Activated CD4-positive, alpha-beta T cell treated with anti-CD3 and anti-CD28 coated beads for 36 hours (primary cell): ENCODE measurements at regions of chr2 and their contacts with region 1.

Region 1: GRCh38 chr2:207166039-207166348 is 246 bp upstream of the KLF7 start:
- DNase-seq: peak; percentile 98
- ATAC-seq: peak; percentile 91
- H3K4me3 Mint-ChIP-seq: peak overlapping the region; percentile 90
- H3K27ac Mint-ChIP-seq: peak overlapping the region; percentile 95
- H3K4me1 Mint-ChIP-seq: peaks cover 44% of the 10 kb centered on the region
- H3K27me3 Mint-ChIP-seq: no peaks in the 10 kb centered on the region

Region 2: DNA sequence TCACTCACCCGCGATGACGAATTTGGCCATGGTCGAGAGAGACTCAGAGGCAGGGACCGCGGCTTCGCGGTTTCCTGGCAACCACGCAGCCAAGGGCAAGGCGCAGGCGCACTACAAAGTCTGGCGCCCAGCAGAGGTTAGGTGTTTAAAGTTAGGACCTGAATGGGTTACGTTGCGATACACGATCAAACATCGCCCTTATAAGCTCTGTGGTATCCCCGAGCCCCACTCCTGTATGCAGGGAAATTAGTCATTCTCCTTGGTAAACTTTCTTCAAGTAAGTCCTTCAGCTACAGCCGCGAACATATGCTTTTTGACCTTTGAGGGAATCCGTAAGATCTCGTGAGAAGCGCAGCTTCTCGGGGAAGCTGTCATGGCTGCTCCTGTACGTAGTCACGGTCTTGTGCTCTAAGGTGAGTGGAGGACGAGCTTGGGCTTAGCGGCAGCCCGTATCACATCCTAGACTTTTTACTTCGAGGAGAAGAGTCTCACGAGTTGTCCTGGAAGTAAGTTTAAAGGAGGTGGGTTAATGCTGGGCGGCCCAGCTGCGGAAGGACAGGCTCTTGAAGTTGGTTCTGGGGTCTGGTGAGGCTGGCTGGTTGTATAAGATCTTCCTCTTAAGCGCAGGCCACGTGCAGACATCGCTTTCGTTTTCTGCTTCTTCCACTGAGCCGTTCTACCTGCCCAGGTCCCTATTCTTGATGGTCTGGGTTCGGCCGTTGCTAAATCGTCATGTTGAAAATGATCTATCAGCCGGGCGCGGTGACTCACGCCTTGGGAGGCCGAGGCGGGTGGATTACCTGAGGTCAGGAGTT is 400.5 kb before region 1 on chr2 and contains the starts of genes FASTKD2 and MDH1B:
- CTCF ChIA-PET with region 1: no interaction called
- POLR2A ChIA-PET with region 1: interaction called, 4 read pairs
- intact Hi-C with region 1: loop called in 1 of 2 experiments (anchors 1 kb)
- DNase-seq: peak; percentile 93
- ATAC-seq: peak; percentile 87
- H3K4me3 Mint-ChIP-seq: peak within 1 kb of the TSS; percentile 93
- H3K27ac Mint-ChIP-seq: peak within 1 kb of the TSS; percentile 98
- H3K4me1 Mint-ChIP-seq: peaks cover 37% of the 10 kb centered on the region
- H3K27me3 Mint-ChIP-seq: no peaks in the 10 kb centered on the region
- total RNA-seq, gene FASTKD2: 33.9 to 37.0 TPM
- total RNA-seq, gene MDH1B: 0.83 to 1.3 TPM

Region 3: DNA sequence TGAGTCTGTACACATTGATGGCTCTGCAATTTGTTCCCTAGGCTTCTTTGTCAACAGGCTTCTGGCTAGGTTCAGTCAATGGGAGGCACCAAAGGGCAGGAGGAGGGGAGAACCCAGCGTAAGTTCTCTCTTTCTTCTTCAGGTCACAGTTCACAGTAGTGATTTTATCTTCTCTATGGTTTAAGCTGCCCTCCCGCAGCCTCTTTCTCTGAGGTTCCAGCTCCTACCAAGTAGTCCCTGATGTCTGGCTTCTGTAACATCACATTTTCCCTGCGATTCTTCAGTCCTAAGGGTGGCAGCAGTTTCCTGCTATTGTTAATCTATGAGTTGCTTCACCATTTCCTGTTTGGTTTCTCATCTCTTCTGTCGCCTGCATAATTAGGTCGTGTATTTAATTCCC is 119.3 kb before region 1 on chr2:
- CTCF ChIA-PET with region 1: no interaction called
- POLR2A ChIA-PET with region 1: no interaction called
- intact Hi-C with region 1: loop called (anchors 2 to 5 kb)
- DNase-seq: peak; percentile 44
- ATAC-seq: peak; percentile 95
- H3K4me3 Mint-ChIP-seq: no peak overlapping the region
- H3K27ac Mint-ChIP-seq: peak overlapping the region; percentile 19
- H3K4me1 Mint-ChIP-seq: peaks cover 13% of the 10 kb centered on the region
- H3K27me3 Mint-ChIP-seq: no peaks in the 10 kb centered on the region

Region 4: DNA sequence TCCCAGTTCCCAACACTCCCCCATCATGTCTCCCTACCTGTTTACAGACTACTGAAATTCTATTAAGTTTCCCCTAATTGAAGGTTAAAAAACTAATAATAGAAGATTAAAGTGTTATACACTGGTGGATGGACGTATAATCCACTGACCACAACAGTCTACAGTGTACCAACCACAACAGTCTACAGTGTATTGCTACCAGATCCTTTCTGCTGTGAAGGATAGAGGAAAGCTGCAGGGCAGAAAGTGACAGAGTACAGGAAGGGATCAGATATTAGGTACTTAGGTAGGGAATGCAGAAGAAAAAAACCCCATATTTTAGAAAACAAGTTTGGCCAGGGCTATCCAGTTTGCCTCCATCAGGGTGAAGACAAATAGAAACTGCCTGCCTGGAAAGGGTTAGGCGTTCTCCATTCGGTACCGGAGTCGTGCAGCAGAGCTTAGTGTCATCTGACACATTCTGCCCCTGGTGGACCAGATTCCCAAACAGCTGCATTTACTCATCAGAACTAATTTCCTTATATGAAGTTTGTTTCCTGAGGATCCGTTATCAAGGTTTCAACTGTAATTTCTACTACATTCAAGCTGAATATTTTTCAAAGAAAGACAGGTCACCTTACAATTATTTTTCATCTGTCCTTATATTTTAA is 50.2 kb before region 1 on chr2:
- CTCF ChIA-PET with region 1: no interaction called
- POLR2A ChIA-PET with region 1: no interaction called
- intact Hi-C with region 1: no loop called
- DNase-seq: no peak
- ATAC-seq: no peak
- H3K4me3 Mint-ChIP-seq: no peak overlapping the region
- H3K27ac Mint-ChIP-seq: no peak overlapping the region
- H3K4me1 Mint-ChIP-seq: peaks cover 15% of the 10 kb centered on the region
- H3K27me3 Mint-ChIP-seq: no peaks in the 10 kb centered on the region

Region 5: DNA sequence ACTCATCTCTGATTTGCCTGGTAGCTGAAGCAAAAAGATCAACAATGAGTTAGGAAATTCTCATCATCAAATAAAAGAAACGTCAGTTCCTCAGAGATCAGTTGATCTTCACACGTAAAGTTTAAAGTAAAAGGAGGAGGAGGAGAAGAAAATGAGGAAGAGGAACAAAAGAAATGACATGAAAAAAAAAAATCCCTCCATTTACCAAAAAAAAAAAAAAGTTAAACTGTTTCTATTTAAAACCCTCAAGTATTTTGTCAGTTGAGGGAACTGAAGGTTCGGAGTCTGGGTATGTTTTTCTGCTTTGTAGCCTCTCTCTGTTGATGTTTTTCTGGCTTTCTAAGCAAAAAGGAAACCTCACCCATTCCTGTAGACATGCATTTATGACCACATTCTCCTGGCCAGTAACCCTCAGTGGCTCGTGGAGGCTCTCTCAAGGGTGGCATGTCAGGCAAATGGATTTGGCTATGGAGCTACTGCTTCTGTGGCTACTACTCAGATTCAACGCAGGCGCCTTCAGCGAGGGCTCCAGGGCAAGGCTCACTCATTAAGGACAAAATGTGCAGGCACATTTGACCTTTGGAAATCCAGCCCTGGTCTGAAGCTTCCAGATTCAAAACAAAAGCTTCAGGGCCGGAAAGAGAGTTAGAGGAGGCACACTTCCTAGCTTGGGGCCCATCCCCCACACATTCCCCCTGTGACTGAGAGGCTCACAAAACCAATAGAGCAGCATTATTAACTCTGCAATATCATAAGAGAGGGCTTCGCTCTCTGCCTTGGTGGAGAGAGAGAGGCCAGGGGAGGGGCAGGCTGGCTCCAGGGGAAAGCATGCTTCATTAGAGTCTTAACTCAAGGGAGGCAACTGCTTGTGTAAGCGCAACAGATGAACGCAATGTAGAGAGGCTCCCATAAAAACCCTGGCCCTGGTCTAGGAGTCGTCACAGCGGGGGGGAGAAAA is 22.5 kb before region 1 on chr2:
- CTCF ChIA-PET with region 1: interaction called, 5 read pairs
- POLR2A ChIA-PET with region 1: interaction called, 6 read pairs
- intact Hi-C with region 1: loop called (anchors 1 to 2 kb)
- DNase-seq: peak; percentile 69
- ATAC-seq: peak; percentile 61
- H3K4me3 Mint-ChIP-seq: peak overlapping the region; percentile 66
- H3K27ac Mint-ChIP-seq: peak overlapping the region; percentile 97
- H3K4me1 Mint-ChIP-seq: peaks cover 66% of the 10 kb centered on the region
- H3K27me3 Mint-ChIP-seq: no peaks in the 10 kb centered on the region

Region 6: DNA sequence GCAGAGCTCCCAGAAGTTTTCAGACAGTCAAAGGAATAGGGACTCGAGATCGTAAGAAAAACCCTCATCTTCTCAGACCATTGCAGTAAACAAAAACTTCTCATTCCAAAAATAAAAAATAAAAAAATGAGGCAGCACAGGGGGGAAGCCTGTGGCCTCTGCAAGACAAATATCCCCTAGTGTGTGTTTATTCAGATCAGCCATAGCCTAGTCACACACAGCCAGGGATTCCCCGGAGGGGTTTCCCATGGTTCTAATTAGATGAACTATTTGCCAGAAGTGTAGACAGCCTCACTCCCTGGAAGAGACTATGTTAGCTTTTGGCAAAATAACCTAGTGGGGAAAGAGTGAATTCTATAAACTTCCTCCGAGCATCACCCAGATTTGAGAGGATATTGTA is 122.6 kb after region 1 on chr2:
- CTCF ChIA-PET with region 1: interaction called, 4 read pairs
- POLR2A ChIA-PET with region 1: interaction called, 5 read pairs
- intact Hi-C with region 1: loop called (anchors 5 kb)
- DNase-seq: peak; percentile 63
- ATAC-seq: peak; percentile 40
- H3K4me3 Mint-ChIP-seq: no peak overlapping the region
- H3K27ac Mint-ChIP-seq: no peak overlapping the region
- H3K4me1 Mint-ChIP-seq: peaks cover 75% of the 10 kb centered on the region
- H3K27me3 Mint-ChIP-seq: peaks cover 2% of the 10 kb centered on the region

Region 7: GRCh38 chr2:207473049-207473930 is 307.3 kb after region 1 on chr2:
- CTCF ChIA-PET with region 1: interaction called, 3 read pairs
- POLR2A ChIA-PET with region 1: no interaction called
- intact Hi-C with region 1: loop called (anchors 5 kb)
- DNase-seq: peak; percentile 71
- ATAC-seq: peak; percentile 94
- H3K4me3 Mint-ChIP-seq: no peak overlapping the region
- H3K27ac Mint-ChIP-seq: no peak overlapping the region
- H3K4me1 Mint-ChIP-seq: peaks cover 16% of the 10 kb centered on the region
- H3K27me3 Mint-ChIP-seq: no peaks in the 10 kb centered on the region

Region 8: GRCh38 chr2:207625018-207625907 is 459.3 kb after region 1 on chr2 and contains the start of gene METTL21A:
- CTCF ChIA-PET with region 1: no interaction called
- POLR2A ChIA-PET with region 1: no interaction called
- intact Hi-C with region 1: loop called in 1 of 2 experiments (anchors 2 kb)
- DNase-seq: peak; percentile 97
- ATAC-seq: peak; percentile 78
- H3K4me3 Mint-ChIP-seq: peak within 1 kb of the TSS; percentile 90
- H3K27ac Mint-ChIP-seq: peak within 1 kb of the TSS; percentile 98
- H3K4me1 Mint-ChIP-seq: peaks cover 44% of the 10 kb centered on the region
- H3K27me3 Mint-ChIP-seq: no peaks in the 10 kb centered on the region
- total RNA-seq, gene METTL21A: 25.6 to 29.5 TPM